ENCODE measurements at regions of chr11 and their contacts with region 1.

Region 1: GRCh38 chr11:102495161-102496042 is 35.1 kb downstream of the MMP7 start:
- DNase-seq: no peak

Region 2: DNA sequence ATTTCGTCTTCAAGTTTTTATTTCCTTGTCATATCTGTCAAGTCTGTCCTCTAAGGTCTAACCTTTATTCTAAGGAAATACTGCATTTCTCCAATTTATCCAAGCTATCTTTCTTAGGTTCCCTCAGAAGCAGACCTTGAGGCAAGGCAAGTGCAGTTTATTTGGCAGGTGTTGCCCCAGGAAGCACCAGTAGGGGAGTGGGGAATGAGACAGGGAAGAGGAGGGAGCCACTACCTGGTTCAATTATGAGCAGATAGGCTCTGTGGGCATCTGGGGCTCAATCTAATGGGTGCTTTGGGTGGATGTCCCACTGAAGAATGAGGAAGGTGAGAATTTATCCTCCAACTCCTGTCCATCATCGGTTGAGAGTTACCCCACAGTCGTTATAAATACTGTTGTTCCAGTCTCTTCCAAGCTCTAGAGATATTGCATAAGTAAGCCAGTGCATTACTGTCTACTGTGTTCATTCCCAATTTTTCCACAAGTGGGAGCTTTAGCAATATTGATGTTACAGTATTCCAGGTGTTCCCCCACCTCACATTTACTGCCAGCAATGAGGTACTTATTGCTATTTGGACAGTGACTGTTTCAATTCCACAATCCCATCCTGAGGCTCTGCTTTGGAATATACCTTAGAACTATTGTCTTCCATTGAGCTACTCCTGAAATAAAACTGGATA is 735.5 kb before region 1 on chr11:
- intact Hi-C with region 1: no loop called
- DNase-seq: no peak

Region 3: DNA sequence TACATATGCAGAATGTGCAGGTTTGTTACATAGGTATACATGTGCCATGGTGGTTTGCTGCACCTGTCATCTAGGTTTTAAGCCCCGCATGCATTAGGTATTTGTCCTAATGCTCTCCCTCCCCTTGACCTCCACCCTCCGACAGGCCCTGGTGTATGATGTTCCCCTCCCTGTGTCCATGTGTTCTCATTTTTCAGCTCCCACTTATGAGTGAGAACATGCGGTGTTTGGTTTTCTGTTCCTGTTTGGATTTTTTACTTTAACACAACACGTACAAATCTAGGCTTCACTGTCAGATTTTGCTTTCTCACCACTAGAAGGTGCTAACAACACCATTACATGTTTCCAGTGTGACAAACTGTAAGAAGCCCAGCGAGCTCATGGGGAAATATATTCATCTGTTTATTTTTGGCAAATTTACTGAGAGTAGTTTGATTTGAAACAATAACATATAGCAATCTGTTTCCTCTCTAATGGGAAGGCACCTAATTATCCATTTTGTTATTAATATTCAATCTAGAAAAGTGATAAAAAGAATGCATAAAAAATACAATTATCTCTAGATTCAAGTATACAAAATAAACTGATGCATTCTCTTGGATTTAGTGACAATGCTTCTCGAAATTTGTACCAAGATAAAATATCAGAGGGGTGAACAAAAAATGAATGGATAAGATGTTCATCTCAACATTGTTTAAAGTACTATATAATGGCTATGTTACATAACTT is 201.4 kb before region 1 on chr11:
- intact Hi-C with region 1: loop called (anchors 5 kb)
- DNase-seq: no peak

Region 4: DNA sequence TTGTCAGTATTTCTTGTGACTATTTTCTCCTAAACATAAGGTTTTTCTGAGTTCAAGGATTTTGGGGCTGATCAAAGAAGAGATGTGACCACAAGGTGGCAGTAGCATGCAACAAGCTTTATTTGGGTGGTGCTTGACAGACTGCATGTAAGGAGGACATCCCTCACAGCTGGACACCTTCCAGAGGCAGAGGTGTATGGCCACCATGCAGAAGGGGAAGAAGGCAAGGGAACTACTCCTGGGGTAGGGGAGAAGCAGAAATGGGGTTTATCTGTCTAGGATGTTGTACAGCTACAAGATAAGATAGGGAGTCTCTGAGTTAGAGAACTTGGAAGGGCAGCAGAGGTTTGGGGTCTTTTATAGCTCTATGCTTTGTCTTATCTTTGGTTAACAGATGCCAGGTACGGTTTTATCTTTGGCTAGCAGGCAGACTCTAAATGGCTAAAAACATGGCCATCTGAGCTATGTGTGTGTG is 153.5 kb before region 1 on chr11:
- intact Hi-C with region 1: loop called (anchors 2 kb)
- DNase-seq: no peak

Region 5: GRCh38 chr11:102390667-102391465 is 104.5 kb before region 1 on chr11:
- intact Hi-C with region 1: loop called (anchors 2 kb)
- DNase-seq: peak; percentile 82

Region 6: GRCh38 chr11:102666331-102666957 is 171.0 kb after region 1 on chr11:
- intact Hi-C with region 1: loop called (anchors 5 kb)
- DNase-seq: no peak

Measured in cardiac septum (tissue), 1 donor.